ENCODE measurements at regions of chr5 and their contacts with region 1.

Region 1: GRCh38 chr5:43019614-43020293 is 20.4 kb downstream of the ANXA2R start:
- H3K4me3 ChIP-seq: peak overlapping the region; percentile 56
- H3K27ac ChIP-seq: peak overlapping the region; percentile 57; the same call in 1 of the 2 replicates
- H3K4me1 ChIP-seq: peaks cover 16% of the 10 kb centered on the region
- CTCF ChIP-seq: peak; percentile 88

Region 2: DNA sequence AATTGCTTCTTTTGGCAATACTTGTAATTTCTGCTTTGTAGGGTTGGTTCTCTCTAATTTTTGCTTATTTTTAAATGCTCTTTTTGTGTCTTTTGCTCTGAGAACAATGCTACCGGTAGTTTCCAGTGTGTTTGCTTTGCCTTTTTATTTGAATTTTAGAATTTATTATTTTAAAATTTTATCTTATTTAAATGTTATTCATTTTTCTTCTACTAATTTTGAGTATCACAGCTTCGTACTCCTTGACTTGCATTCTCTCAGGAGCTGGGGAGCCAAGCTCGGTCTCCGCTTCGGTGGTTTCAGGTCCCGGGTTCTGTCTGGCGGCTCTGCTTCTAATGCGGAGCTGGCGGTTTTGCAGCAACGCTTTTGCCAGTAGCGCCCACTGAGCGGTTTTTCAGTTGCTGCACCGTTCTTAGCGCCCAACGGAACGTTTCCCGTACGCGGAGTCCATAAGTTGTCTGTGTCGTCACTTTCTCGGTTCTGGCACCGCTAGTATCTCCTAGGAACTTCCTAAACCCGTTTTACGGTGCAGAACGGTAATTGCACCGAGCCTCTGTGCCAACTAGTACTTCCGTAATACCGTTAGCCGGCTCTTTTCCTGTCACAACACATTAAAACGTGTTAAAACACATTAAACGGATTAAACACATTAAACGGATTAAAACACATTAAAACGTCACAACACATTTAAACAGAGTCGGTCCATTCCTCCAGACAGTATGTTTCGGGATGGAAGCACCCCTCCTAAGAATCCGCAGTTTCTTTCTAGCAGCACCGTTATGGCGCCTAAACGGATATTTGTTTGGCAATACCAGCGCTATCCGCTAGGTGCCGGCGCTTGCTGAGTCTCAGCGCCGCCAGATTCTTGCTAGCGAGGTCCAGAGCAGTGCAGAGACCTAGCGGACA is 25.3 kb before region 1 on chr5:
- CTCF ChIA-PET with region 1: interaction called, 59 read pairs
- POLR2A ChIA-PET with region 1: interaction called, 28 read pairs
- H3K4me3 ChIP-seq: peak overlapping the region; percentile 83
- H3K27ac ChIP-seq: 0 out of 2 replicates have a peak overlapping the region, but pooled peaks have one; percentile 2
- H3K4me1 ChIP-seq: no peaks in the 10 kb centered on the region
- CTCF ChIP-seq: peak; percentile 91

Region 3: DNA sequence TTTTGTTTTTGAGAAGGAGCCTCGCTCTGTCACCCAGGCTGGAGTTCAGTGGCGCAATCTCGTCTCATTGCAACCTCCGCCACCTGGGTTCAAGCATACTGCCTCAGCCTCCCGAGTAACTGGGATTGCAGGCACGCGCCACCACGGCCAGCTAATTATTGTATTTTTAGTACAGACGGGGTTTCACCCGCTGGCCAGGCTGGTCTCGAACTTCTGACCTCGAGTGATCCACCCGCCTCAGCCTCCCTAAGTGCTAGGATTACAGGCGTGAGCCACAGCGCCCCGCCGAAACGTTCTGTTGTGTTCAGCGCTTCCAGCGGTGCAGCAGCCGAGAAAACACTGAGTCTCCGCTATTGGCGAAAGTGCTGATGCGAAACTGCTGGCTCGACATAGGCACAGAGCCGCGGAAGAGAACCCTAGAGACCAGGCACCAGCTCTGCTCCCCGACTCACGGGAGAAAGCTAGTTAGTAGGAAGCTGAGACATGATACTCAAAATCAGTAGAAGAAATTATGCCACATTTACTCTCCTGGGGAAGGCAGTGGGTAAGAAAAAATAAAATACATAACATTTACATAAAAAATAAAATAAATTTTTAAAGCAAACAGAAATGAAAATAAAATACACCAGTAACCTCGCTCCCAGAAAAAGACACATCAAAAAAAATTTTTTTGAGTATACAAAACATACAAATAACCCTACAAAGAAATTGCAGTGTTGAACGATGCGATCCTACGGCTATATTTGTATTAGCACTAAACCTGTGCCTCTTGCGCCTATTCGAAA is 11.2 kb before region 1 on chr5:
- CTCF ChIA-PET with region 1: interaction called, 4 read pairs
- POLR2A ChIA-PET with region 1: interaction called, 20 read pairs
- H3K4me3 ChIP-seq: peak overlapping the region; percentile 50
- H3K27ac ChIP-seq: peak overlapping the region; percentile 75
- H3K4me1 ChIP-seq: peaks cover 3% of the 10 kb centered on the region; the same call in 1 of the 2 replicates
- CTCF ChIP-seq: peak; percentile 83

Region 4: GRCh38 chr5:43040287-43041098 is 20.7 kb after region 1 on chr5 and contains the start of gene ANXA2R:
- CTCF ChIA-PET with region 1: interaction called, 19 read pairs
- POLR2A ChIA-PET with region 1: interaction called, 34 read pairs
- H3K4me3 ChIP-seq: peak within 1 kb of the TSS; percentile 56
- H3K27ac ChIP-seq: peak within 1 kb of the TSS; percentile 84
- H3K4me1 ChIP-seq: no peaks in the 10 kb centered on the region
- CTCF ChIP-seq: peak; percentile 79

Region 5: GRCh38 chr5:43066799-43067741 is 47.3 kb after region 1 on chr5:
- CTCF ChIA-PET with region 1: interaction called, 6 read pairs
- POLR2A ChIA-PET with region 1: interaction called, 12 read pairs
- H3K4me3 ChIP-seq: peak overlapping the region; percentile 63
- H3K27ac ChIP-seq: peak overlapping the region; percentile 87
- H3K4me1 ChIP-seq: peaks cover 2% of the 10 kb centered on the region; the same call in 1 of the 2 replicates
- CTCF ChIP-seq: no peak

Region 6: GRCh38 chr5:44714871-44715561 is 1695.3 kb after region 1 on chr5:
- CTCF ChIA-PET with region 1: no interaction called
- POLR2A ChIA-PET with region 1: no interaction called
- H3K4me3 ChIP-seq: no peak overlapping the region
- H3K27ac ChIP-seq: no peak overlapping the region
- H3K4me1 ChIP-seq: 0 out of 2 replicates have a peak, but pooled peaks cover 2% of the 10 kb centered on the region
- CTCF ChIP-seq: no peak

Measured in HEK293 (cell line).